Spleen (tissue), 13 donors: ENCODE measurements at regions of chr19 and their contacts with region 1.

Region 1: DNA sequence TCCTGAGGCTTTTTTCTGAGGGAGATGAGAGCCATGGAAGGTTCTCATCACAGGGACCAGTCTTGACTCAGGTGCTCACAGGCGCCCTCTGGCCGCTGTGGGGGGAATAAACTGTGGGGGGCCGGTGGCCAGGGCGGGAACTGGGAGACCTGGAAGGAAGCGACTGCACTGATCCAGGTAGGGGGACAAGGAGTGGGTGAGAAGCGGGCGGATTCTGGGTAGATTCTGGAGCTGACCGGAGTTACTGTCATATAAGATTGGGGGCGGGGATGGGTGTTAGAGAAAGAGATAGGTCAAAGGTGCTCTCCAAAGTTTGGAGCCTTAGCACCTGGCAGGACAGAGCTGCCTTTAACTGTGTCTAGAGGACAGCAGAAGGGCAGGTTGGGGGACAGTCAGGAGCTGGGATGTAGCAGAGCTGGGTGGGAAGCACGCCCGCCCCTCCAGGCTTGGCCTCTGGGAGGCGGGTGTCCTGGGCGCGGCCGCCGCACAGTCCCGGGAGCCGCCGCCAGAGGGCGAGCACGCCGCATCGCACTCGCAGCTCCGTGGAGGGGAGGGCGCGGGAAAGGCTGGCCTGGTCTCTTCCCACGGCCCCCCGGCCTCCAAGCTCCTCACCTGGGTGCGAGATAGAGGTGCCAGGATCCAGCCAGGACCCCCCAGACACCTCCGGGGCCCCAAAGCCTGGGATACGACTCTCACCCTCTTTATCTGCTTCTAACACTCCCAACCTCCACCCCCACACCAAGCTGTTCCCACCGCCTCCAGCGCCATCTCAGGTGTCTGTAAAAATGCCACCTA is 4.2 kb upstream of the DAND5 start:
- DNase-seq: peak; percentile 95
- H3K4me3 ChIP-seq: peak overlapping the region; percentile 27 to 72 (median 38)
- H3K27ac ChIP-seq: peak overlapping the region in 7 of 8 donors; percentile 27 to 79 (median 62)
- H3K4me1 ChIP-seq: peaks cover 3 to 14% (median 12%) of the 10 kb centered on the region in 6 donors
- H3K27me3 ChIP-seq: no peaks in the 10 kb centered on the region
- CTCF ChIP-seq: peak; percentile 80 to 98 (median 96)
- POLR2A ChIP-seq: no peak

Region 2: GRCh38 chr19:12881172-12881808 is 83.9 kb before region 1 on chr19 and contains the start of gene DNASE2:
- intact Hi-C with region 1: loop called (anchors 10 kb)
- DNase-seq: peak; percentile 99
- H3K4me3 ChIP-seq: peak within 1 kb of the TSS; percentile 62 to 92 (median 72)
- H3K27ac ChIP-seq: peak within 1 kb of the TSS; percentile 83 to 95 (median 88)
- H3K4me1 ChIP-seq: peaks cover 11 to 69% (median 41%) of the 10 kb centered on the region in 6 donors
- H3K27me3 ChIP-seq: peaks cover 0 to 23% (median 16%) of the 10 kb centered on the region in 7 donors
- CTCF ChIP-seq: peak in 2 of 11 experiments; percentile 15 to 35
- POLR2A ChIP-seq: peak; percentile 18 to 83 (median 41)
- total RNA-seq, gene DNASE2: 20.4 to 36.1 (median 24.4) TPM